HAP-1 (cell line): ENCODE measurements at regions of chr7 and their contacts with region 1.

Region 1: GRCh38 chr7:4753711-4754432 is 21.6 kb upstream of the AP5Z1 start:
- DNase-seq: peak; percentile 42 to 89
- H3K4me3 ChIP-seq: no peak overlapping the region
- H3K4me1 ChIP-seq: no peaks in the 10 kb centered on the region
- H3K27me3 ChIP-seq: no peaks in the 10 kb centered on the region

Region 2: DNA sequence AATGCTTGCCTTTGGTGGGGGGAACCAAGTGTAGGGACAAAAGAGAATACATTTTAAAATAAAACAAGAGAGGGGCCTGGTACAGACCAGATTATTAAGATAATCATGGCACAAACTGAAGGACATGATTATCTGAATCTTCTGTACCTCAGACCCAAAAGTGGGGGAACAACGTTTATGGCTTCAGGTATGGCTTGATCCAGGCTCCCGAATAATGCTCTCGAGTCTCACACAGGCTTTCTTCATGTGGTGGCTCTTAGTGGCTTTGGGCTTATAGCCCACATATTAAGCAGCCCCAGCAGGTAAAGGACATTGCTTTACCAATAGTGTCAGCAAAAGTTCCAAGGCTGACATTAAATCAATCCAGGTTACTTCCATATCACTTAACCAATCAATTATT is 178.6 kb before region 1 on chr7:
- in situ Hi-C with region 1: no loop called
- DNase-seq: no peak
- H3K4me3 ChIP-seq: no peak overlapping the region
- H3K4me1 ChIP-seq: no peaks in the 10 kb centered on the region
- H3K27me3 ChIP-seq: no peaks in the 10 kb centered on the region

Region 3: DNA sequence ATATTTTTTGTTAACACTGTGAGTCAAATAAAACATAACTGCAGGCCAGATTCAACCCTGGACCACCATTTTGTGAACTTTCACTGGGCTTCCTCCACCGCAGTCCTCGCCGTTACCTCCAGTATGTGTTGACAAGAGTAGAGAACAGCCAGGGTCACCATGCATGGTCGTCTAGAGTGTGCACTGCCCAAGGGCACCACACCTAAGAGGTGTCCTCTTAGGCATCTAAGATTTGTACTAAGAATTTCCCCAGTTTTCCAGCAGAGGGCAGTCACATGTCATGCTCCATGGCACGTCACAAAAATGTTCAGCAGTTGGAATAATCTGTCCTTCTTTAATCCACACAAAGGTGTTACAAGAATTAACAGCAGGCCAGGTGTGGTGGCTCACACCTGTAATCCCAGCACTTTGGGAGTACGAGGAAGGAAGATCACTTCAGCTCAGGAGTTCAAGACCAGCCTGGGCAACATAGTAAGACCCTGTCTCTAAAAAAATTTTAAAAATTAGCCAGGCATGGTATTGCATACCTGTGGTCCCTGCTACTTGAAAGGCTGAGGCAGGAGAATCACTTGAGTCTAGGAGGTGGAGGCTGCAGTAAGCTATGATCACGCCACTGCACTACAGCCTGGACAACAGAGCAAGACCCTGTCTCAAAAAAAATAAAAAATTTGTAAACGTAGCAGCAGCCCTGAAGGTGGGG is 143.0 kb before region 1 on chr7:
- in situ Hi-C with region 1: loop called (anchors 25 kb)
- DNase-seq: peak; percentile 69 to 74
- H3K4me3 ChIP-seq: no peak overlapping the region
- H3K4me1 ChIP-seq: peaks cover 11% of the 10 kb centered on the region
- H3K27me3 ChIP-seq: no peaks in the 10 kb centered on the region

Region 4: DNA sequence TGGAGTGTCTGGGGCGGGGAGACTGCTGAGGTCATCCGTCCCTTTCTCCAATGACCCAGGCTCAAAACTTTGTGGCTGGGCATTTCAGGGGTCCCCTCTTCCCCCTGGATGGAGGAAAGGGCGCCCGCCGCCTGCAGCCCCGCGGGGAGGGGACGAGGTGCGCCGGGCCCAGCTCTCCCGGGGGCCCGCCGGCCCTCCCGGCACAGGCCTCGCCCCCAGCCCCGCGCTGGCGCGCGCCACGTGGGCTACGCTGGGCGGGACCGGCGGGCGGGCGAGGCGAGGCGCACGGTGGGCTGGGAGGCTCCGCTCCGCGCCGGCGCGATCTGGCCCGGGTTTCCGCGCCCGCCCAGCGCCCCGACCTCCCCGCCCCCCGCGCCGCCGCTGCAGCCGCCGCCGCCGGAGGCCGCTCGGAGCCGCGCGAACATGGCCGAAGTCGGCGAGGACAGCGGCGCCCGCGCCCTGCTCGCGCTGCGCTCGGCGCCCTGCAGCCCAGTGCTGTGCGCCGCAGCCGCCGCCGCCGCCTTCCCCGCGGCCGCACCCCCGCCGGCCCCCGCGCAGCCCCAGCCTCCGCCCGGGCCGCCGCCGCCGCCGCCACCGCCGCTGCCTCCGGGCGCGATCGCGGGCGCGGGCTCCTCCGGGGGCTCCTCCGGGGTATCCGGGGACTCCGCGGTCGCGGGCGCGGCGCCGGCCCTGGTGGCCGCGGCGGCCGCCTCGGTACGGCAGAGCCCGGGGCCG is 71.8 kb before region 1 on chr7 and contains the start of gene FOXK1:
- in situ Hi-C with region 1: loop called (anchors 5 kb)
- DNase-seq: peak; percentile 33 to 85
- H3K4me3 ChIP-seq: peak within 1 kb of the TSS; percentile 68
- H3K4me1 ChIP-seq: peaks cover 6% of the 10 kb centered on the region
- H3K27me3 ChIP-seq: no peaks in the 10 kb centered on the region